ENCODE measurements at regions of chr4 and their contacts with region 1.

Region 1: DNA sequence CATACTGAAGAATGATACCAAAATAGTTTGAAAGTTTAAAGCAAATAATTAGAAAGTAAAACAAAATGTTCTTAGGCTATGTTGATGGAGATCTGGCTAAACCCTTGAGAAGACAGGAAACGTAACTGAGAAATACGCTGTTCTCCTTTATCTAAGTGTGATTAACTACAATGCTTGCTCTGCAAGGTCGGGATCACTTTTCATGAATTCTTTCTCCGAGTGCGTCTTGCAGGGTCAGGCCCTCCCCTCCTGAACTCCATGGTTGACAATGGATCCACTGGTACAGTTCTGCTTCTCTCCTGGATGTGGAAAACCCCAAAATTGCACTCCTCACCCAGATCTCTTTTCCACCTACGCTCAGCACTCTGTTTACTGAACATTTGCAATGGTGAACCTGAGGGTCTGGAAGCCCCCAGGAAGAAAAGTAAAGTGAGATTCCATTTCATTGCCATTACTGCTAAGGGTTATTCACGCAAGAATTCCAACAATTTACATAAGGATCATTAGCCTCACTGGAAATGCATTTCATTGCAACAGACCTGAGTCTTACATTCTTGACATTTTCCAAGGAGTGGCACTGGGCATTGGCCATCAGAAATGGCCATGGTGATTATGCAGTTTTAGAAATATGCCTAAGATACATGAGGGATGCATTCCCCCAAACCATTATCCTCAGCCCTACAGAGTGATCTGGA is 24.6 kb upstream of the WWC2 start:
- DNase-seq: no peak
- H3K4me3 Mint-ChIP-seq: no peak overlapping the region
- H3K27ac Mint-ChIP-seq: no peak overlapping the region
- H3K4me1 Mint-ChIP-seq: no peaks in the 10 kb centered on the region
- H3K27me3 Mint-ChIP-seq: peaks cover 8% of the 10 kb centered on the region

Region 2: GRCh38 chr4:182938205-182938645 is 136.2 kb before region 1 on chr4:
- intact Hi-C with region 1: loop called (anchors 1 kb)
- DNase-seq: peak; percentile 31
- H3K4me3 Mint-ChIP-seq: no peak overlapping the region
- H3K27ac Mint-ChIP-seq: no peak overlapping the region
- H3K4me1 Mint-ChIP-seq: no peaks in the 10 kb centered on the region
- H3K27me3 Mint-ChIP-seq: peaks cover 14% of the 10 kb centered on the region

Region 3: GRCh38 chr4:183098723-183099536 is 24.5 kb after region 1 on chr4 and contains the start of gene WWC2:
- intact Hi-C with region 1: no loop called
- DNase-seq: peak; percentile 44
- H3K4me3 Mint-ChIP-seq: peak within 1 kb of the TSS; percentile 58
- H3K27ac Mint-ChIP-seq: no peak within 1 kb of the TSS
- H3K4me1 Mint-ChIP-seq: no peaks in the 10 kb centered on the region
- H3K27me3 Mint-ChIP-seq: peaks cover 68% of the 10 kb centered on the region
- total RNA-seq, gene WWC2: 0.39 and 0.75 TPM in 2 replicates

Region 4: GRCh38 chr4:183130328-183131173 is 56.1 kb after region 1 on chr4:
- intact Hi-C with region 1: no loop called
- DNase-seq: no peak
- H3K4me3 Mint-ChIP-seq: no peak overlapping the region
- H3K27ac Mint-ChIP-seq: no peak overlapping the region
- H3K4me1 Mint-ChIP-seq: no peaks in the 10 kb centered on the region
- H3K27me3 Mint-ChIP-seq: peaks cover 12% of the 10 kb centered on the region

Region 5: GRCh38 chr4:183249857-183250256 is 175.4 kb after region 1 on chr4:
- intact Hi-C with region 1: loop called (anchors 1 kb)
- DNase-seq: no peak
- H3K4me3 Mint-ChIP-seq: no peak overlapping the region
- H3K27ac Mint-ChIP-seq: no peak overlapping the region
- H3K4me1 Mint-ChIP-seq: no peaks in the 10 kb centered on the region
- H3K27me3 Mint-ChIP-seq: peaks cover 7% of the 10 kb centered on the region

Region 6: GRCh38 chr4:183407128-183407585 is 332.7 kb after region 1 on chr4:
- intact Hi-C with region 1: loop called (anchors 1 kb)
- DNase-seq: peak; percentile 82
- H3K4me3 Mint-ChIP-seq: peak overlapping the region; percentile 81
- H3K27ac Mint-ChIP-seq: no peak overlapping the region
- H3K4me1 Mint-ChIP-seq: peaks cover 8% of the 10 kb centered on the region
- H3K27me3 Mint-ChIP-seq: peaks cover 10% of the 10 kb centered on the region